GM13977 (cell line): ENCODE measurements at regions of chr3 and their contacts with region 1.

Region 1: GRCh38 chr3:172501560-172501959 is 21.7 kb downstream of the TNFSF10 start:
- DNase-seq: no peak
- CTCF ChIP-seq: no peak

Region 2: DNA sequence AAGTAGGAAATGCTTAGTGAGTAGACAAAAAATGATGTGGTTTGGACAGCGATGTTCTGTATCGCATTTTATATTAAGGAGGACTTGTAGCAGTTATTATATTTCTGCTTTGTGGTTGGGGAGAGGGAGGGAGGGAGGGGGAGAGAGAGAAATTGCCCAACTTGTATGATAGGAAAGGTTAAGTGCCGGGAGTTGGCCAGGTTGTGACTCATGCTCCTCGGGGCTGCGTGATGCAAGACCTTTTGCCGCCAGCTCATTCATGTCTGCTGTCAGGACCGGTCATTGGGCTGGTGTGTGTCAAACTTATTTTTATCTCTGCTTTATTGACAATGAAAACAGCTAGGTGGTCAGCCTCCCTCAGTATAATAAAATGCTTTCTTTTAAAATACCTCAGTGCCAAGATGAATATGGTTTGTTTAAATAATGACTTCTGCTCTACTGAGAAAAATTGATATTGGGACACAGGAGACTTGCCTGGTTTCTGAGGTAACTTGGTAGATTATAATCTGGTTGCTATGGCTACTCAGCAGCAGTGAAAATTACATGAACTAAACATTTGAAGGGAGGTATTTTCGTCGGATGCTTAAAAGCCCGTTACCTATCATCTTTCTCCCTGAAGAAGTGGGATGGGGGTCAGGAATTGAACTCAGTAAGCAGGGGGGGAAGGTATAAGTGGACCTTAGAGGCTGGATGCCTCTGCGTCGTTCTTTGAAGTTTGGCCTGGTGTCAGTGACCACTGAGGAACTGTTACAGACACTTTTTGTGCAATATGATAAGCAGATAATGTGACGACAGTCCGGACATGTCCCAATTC is 371.5 kb before region 1 on chr3:
- in situ Hi-C with region 1: no loop called
- DNase-seq: no peak
- CTCF ChIP-seq: no peak

Region 3: GRCh38 chr3:172595641-172596393 is 94.3 kb after region 1 on chr3:
- in situ Hi-C with region 1: loop called (anchors 5 kb)
- DNase-seq: peak; percentile 73
- CTCF ChIP-seq: peak; percentile 88